Caco-2 (cell line): ENCODE measurements at regions of chr15 and their contacts with region 1.

Region 1: GRCh38 chr15:39934397-39935071 is 619 bp downstream of the EIF2AK4 start:
- DNase-seq: no peak
- H3K4me3 ChIP-seq: peak overlapping the region; percentile 86
- H3K4me3 Mint-ChIP-seq: peak overlapping the region; percentile 92
- H3K27ac Mint-ChIP-seq: peak overlapping the region; percentile 87
- H3K4me1 ChIP-seq: peaks cover 17% of the 10 kb centered on the region; the same call in 1 of the 2 replicates
- H3K4me1 Mint-ChIP-seq: peaks cover 10% of the 10 kb centered on the region
- H3K27me3 ChIP-seq: no peaks in the 10 kb centered on the region
- H3K27me3 Mint-ChIP-seq: no peaks in the 10 kb centered on the region
- CTCF ChIP-seq: no peak

Region 2: DNA sequence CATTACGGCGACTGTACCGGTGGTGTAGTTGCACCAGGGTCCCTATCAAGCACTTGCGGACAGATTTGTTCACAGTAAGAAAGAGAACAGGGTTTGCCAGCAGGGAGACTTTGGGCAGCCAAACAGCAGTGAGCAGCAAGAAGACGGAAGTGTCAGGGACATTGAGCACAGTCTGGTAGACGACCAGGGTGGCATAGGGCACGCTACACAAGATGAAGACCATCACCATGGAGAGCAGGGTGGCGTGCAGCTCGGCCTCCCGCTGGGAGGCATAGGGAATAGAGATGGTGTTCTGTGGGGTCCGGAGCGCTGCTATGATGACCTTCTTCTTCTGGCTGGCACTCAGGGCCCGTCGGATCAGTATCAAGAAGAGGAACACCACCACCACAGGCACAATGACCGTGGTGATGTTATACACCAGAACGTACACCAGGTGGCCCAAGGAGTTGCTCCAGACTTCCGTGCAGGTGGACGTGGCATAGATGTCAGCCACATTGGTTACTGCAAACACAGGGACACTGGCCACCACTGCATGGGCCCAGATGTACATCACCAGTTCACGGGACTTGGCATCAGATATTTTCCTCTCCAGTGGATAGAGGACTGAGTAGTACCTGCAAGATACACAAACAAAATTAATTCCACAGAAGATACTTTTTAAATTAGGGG is 132.8 kb before region 1 on chr15:
- CTCF ChIA-PET with region 1: no interaction called
- POLR2A ChIA-PET with region 1: no interaction called
- intact Hi-C with region 1: loop called (anchors 5 kb)
- DNase-seq: peak; percentile 55
- H3K4me3 ChIP-seq: no peak overlapping the region
- H3K4me3 Mint-ChIP-seq: no peak overlapping the region
- H3K27ac Mint-ChIP-seq: no peak overlapping the region
- H3K4me1 ChIP-seq: peaks cover 3% of the 10 kb centered on the region; the same call in 1 of the 2 replicates
- H3K4me1 Mint-ChIP-seq: peaks cover 8% of the 10 kb centered on the region
- H3K27me3 ChIP-seq: no peaks in the 10 kb centered on the region
- H3K27me3 Mint-ChIP-seq: no peaks in the 10 kb centered on the region
- CTCF ChIP-seq: peak; percentile 44 to 60

Region 3: GRCh38 chr15:39976291-39977274 is 42.0 kb after region 1 on chr15:
- CTCF ChIA-PET with region 1: interaction called, 7 read pairs
- POLR2A ChIA-PET with region 1: no interaction called
- intact Hi-C with region 1: loop called (anchors 5 kb)
- DNase-seq: peak; percentile 75 to 81
- H3K4me3 ChIP-seq: peak overlapping the region; percentile 74
- H3K4me3 Mint-ChIP-seq: peak overlapping the region; percentile 75
- H3K27ac Mint-ChIP-seq: peak overlapping the region; percentile 85
- H3K4me1 ChIP-seq: peaks cover 3% of the 10 kb centered on the region; the same call in 1 of the 2 replicates
- H3K4me1 Mint-ChIP-seq: peaks cover 6% of the 10 kb centered on the region
- H3K27me3 ChIP-seq: no peaks in the 10 kb centered on the region
- H3K27me3 Mint-ChIP-seq: no peaks in the 10 kb centered on the region
- CTCF ChIP-seq: peak in 1 of 2 experiments; percentile 58